ENCODE measurements at regions of chr10 and their contacts with region 1.

Region 1: GRCh38 chr10:122435212-122435827 is 19.1 kb upstream of the ARMS2 start:
- DNase-seq: peak; percentile 47
- H3K4me3 ChIP-seq: no peak overlapping the region; a peak in 1 of 4 replicates
- H3K27ac ChIP-seq: no peak overlapping the region
- H3K4me1 ChIP-seq: no peaks in the 10 kb centered on the region
- H3K27me3 ChIP-seq: no peaks in the 10 kb centered on the region
- CTCF ChIP-seq: peak; percentile 79
- EP300 ChIP-seq: no peak
- RAD21 ChIP-seq: peak; percentile 85

Region 2: DNA sequence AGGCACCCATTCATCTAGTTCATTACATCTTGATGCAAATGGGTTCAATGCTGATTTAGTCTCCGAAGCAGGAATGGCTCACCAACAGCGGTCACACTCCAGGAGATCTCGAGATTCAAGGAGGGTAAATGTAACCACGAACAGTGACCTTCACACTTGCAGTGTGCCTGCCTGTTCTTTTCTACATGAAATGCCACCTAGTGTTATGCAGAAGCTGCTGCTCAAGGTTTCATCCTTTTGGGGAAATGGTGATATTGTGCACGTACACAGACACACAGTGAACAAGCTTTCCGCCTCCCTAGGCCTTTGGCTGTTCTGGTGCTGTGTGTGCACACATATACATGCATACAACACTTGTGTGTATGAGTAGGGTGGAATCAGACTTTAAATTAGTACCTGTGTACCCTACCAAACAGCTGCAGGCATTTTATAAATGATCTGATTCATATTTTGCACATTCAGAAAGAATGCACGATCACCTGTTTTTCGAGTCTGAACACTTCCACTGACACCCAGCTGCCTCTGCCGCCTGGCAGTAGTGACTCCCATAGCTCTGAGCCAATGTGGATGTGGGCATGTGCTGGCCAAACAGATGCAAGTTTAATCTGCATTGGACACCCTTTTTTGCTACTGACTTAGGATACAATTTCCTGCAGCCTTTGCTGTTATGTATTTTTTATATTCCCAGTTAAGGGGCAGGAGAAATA is 345.9 kb before region 1 on chr10:
- CTCF ChIA-PET with region 1: no interaction called
- POLR2A ChIA-PET with region 1: no interaction called
- DNase-seq: no peak
- H3K4me3 ChIP-seq: no peak overlapping the region
- H3K27ac ChIP-seq: no peak overlapping the region
- H3K4me1 ChIP-seq: peaks cover 0 to 3% of the 10 kb centered on the region in 2 experiments; a peak in 1 of 4 replicates
- H3K27me3 ChIP-seq: peaks cover 5% of the 10 kb centered on the region; the same call in 1 of the 2 replicates
- CTCF ChIP-seq: no peak
- EP300 ChIP-seq: no peak
- RAD21 ChIP-seq: no peak

Region 3: GRCh38 chr10:122239578-122240257 is 195.6 kb before region 1 on chr10:
- CTCF ChIA-PET with region 1: no interaction called
- POLR2A ChIA-PET with region 1: no interaction called
- DNase-seq: no peak
- H3K4me3 ChIP-seq: no peak overlapping the region
- H3K27ac ChIP-seq: no peak overlapping the region
- H3K4me1 ChIP-seq: peaks cover 0 to 31% of the 10 kb centered on the region in 2 experiments; a peak in 2 of 4 replicates
- H3K27me3 ChIP-seq: no peaks in the 10 kb centered on the region
- CTCF ChIP-seq: no peak
- EP300 ChIP-seq: no peak
- RAD21 ChIP-seq: 0 out of 2 replicates have a peak, but pooled peaks have one; percentile 9

Region 4: DNA sequence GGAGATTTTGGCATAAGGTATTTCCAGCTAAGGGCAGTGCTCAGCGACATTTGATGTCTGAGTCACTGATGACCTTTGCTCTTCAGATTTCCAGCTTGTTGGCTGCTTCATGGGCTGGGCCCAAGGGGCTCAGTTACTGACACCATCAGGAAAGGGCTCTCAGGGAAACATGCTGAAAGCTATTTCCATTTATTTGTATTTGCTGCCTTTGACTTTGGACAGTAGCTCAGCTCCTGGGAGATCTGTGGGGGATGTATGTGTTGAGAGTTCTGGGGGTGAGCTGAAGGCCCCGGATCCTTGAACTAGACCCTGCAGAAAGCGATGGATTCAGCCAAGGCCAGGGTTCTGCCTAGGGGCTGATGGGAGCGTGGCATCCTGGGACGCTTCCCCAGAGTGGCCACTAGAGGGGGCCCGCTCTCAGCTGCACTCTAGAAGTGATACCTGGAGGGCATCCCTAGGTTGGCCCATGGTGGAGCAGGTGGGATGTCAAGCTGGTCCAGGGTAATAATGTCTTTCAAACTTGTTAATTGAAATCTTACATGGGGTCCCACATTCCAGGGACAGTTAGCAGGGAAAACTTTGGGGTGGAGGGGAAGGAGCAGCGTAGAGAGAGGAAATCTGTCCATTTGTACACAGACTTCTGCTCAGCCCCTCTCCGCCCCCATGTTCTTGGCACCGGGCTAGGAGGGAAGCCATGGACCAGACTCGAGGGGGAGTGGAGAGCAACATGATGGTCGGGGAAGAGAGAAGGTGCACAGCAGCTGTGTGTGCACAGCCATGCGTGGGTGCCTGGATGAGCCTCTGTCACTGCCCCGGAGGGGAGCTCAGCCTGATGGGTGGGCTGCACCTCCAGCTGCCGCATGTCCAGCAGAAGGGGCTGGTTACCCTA is 167.2 kb before region 1 on chr10:
- CTCF ChIA-PET with region 1: interaction called, 15 read pairs
- POLR2A ChIA-PET with region 1: no interaction called
- DNase-seq: peak; percentile 86
- H3K4me3 ChIP-seq: no peak overlapping the region; a peak in 1 of 4 replicates
- H3K27ac ChIP-seq: no peak overlapping the region
- H3K4me1 ChIP-seq: no peaks in the 10 kb centered on the region; a peak in 1 of 4 replicates
- H3K27me3 ChIP-seq: no peaks in the 10 kb centered on the region
- CTCF ChIP-seq: peak; percentile 91
- EP300 ChIP-seq: no peak
- RAD21 ChIP-seq: peak; percentile 61

Region 5: DNA sequence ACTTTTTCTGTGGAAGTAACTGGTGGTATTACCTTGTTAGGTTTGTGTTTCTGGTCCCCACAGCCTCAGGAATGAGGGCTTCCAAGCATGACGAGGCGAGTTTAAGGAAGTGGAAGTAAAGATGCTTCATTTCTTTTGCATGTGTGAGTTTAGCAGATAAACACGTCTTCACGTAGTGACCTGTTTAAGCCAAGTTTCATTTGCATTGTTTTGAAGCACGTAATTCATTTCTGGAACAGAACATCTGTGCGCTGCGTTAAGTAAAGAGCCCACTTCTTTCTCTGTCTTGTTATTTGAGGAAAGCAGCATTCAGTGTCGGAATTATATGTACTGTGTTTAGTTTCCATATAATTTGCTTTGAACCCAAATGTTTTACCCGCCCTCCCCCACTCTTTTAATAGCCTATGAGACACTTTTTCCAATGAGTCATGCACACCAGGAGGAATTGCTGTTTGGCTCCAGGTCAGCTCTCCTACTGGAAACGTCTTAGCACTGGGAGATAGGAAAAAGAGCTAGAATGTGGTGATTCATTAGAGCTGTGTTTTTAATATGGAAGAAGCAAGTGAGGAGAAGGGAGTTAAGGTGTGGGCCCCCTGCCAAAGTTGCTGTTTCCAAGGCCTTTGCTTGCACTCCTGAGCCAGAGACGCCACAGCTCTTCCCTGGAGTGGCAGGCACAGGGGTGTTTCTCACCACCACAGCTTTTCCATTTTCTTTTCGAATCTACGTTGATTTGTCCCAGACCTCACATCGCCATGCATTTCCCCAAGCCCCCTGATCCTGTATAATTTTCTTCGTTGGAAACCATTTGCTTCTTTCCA is 127.4 kb before region 1 on chr10:
- CTCF ChIA-PET with region 1: interaction called, 22 read pairs
- POLR2A ChIA-PET with region 1: no interaction called
- DNase-seq: no peak
- H3K4me3 ChIP-seq: peak overlapping the region; percentile 7 to 45; a peak in 3 of 4 replicates
- H3K27ac ChIP-seq: peak overlapping the region; percentile 45 to 88; a peak in 3 of 4 replicates
- H3K4me1 ChIP-seq: peaks cover 0 to 9% of the 10 kb centered on the region in 2 experiments; a peak in 2 of 4 replicates
- H3K27me3 ChIP-seq: no peaks in the 10 kb centered on the region
- CTCF ChIP-seq: no peak
- EP300 ChIP-seq: peak; percentile 50 to 73; a peak in 3 of 4 replicates
- RAD21 ChIP-seq: no peak

Region 6: DNA sequence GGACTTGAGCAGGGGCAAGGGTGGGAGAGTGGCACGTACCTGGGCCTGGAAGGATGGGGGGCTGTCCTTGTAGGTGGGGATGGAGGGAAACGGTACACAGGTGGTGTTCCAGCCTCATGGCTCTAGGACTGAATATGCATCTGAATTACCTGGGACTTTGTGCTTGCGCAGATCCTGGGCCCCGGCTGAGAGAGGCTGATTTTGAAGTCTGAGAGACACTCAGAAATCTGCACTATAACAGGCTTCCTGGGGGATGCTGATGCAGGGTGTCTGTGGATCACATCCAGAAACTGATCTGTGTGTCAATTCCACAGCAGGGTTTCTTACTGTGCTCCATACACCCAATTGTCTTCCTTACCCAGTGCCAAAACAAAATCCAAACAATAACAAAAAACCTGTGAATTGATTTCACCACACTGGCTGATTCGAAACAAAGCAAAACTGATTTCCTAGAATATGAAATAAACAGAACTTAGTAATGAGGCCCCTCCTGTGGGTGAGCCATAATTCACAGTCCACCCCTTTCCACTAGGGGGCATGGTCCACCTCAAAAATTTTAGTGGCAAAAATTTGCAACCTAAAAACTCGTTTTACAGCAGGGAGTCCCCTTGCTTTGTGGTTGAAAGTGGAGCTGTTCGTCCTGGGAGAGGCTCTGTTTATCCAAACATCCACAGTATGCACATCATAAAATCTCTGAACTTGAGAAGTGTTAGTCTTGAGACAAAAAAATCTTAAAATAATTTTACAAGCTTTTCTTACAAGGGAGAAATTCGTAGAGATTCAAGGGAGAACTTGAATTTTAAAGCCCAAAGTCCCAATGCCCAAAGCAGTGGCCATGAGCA is 92.8 kb before region 1 on chr10:
- CTCF ChIA-PET with region 1: interaction called, 25 read pairs
- POLR2A ChIA-PET with region 1: interaction called, 3 read pairs
- DNase-seq: peak; percentile 63
- H3K4me3 ChIP-seq: no peak overlapping the region
- H3K27ac ChIP-seq: no peak overlapping the region
- H3K4me1 ChIP-seq: no peaks in the 10 kb centered on the region
- H3K27me3 ChIP-seq: no peaks in the 10 kb centered on the region
- CTCF ChIP-seq: peak; percentile 76
- EP300 ChIP-seq: no peak
- RAD21 ChIP-seq: peak; percentile 80

Region 7: GRCh38 chr10:122419876-122420623 is 15.3 kb before region 1 on chr10:
- CTCF ChIA-PET with region 1: interaction called, 20 read pairs
- POLR2A ChIA-PET with region 1: no interaction called
- DNase-seq: no peak
- H3K4me3 ChIP-seq: peak overlapping the region in 1 of 2 experiments; percentile 4; a peak in 1 of 4 replicates
- H3K27ac ChIP-seq: peak overlapping the region; percentile 64 to 83; a peak in 3 of 4 replicates
- H3K4me1 ChIP-seq: peaks cover 11 to 17% of the 10 kb centered on the region in 2 experiments; a peak in 3 of 4 replicates
- H3K27me3 ChIP-seq: no peaks in the 10 kb centered on the region
- CTCF ChIP-seq: no peak
- EP300 ChIP-seq: peak in 1 of 2 experiments; percentile 57; a peak in 1 of 4 replicates
- RAD21 ChIP-seq: no peak

Region 8: GRCh38 chr10:122495406-122496340 is 60.4 kb after region 1 on chr10:
- CTCF ChIA-PET with region 1: interaction called, 11 read pairs
- POLR2A ChIA-PET with region 1: no interaction called
- DNase-seq: no peak
- H3K4me3 ChIP-seq: no peak overlapping the region
- H3K27ac ChIP-seq: peak overlapping the region in 1 of 2 experiments; percentile 83; a peak in 3 of 4 replicates
- H3K4me1 ChIP-seq: peaks cover 0 to 18% of the 10 kb centered on the region in 2 experiments; a peak in 2 of 4 replicates
- H3K27me3 ChIP-seq: no peaks in the 10 kb centered on the region
- CTCF ChIP-seq: no peak
- EP300 ChIP-seq: no peak
- RAD21 ChIP-seq: no peak

Region 9: GRCh38 chr10:122515588-122516231 is 80.4 kb after region 1 on chr10:
- CTCF ChIA-PET with region 1: no interaction called
- POLR2A ChIA-PET with region 1: no interaction called
- DNase-seq: no peak
- H3K4me3 ChIP-seq: no peak overlapping the region
- H3K27ac ChIP-seq: no peak overlapping the region
- H3K4me1 ChIP-seq: peaks cover 0 to 4% of the 10 kb centered on the region in 2 experiments; a peak in 1 of 4 replicates
- H3K27me3 ChIP-seq: no peaks in the 10 kb centered on the region
- CTCF ChIP-seq: no peak
- EP300 ChIP-seq: no peak
- RAD21 ChIP-seq: no peak

Region 10: GRCh38 chr10:122571892-122572291 is 136.6 kb after region 1 on chr10:
- CTCF ChIA-PET with region 1: interaction called, 12 read pairs
- POLR2A ChIA-PET with region 1: no interaction called
- DNase-seq: no peak
- H3K4me3 ChIP-seq: no peak overlapping the region
- H3K27ac ChIP-seq: no peak overlapping the region
- H3K4me1 ChIP-seq: no peaks in the 10 kb centered on the region
- H3K27me3 ChIP-seq: no peaks in the 10 kb centered on the region
- CTCF ChIP-seq: no peak
- EP300 ChIP-seq: no peak
- RAD21 ChIP-seq: no peak

Region 11: GRCh38 chr10:122665329-122665860 is 230.1 kb after region 1 on chr10:
- CTCF ChIA-PET with region 1: no interaction called
- POLR2A ChIA-PET with region 1: no interaction called
- DNase-seq: no peak
- H3K4me3 ChIP-seq: no peak overlapping the region
- H3K27ac ChIP-seq: no peak overlapping the region
- H3K4me1 ChIP-seq: no peaks in the 10 kb centered on the region
- H3K27me3 ChIP-seq: no peaks in the 10 kb centered on the region; the same call in 1 of the 2 replicates
- CTCF ChIP-seq: no peak
- EP300 ChIP-seq: no peak
- RAD21 ChIP-seq: no peak

Measured in SK-N-SH (cell line).